ENCODE measurements at regions of chr15 and their contacts with region 1.

Region 1: DNA sequence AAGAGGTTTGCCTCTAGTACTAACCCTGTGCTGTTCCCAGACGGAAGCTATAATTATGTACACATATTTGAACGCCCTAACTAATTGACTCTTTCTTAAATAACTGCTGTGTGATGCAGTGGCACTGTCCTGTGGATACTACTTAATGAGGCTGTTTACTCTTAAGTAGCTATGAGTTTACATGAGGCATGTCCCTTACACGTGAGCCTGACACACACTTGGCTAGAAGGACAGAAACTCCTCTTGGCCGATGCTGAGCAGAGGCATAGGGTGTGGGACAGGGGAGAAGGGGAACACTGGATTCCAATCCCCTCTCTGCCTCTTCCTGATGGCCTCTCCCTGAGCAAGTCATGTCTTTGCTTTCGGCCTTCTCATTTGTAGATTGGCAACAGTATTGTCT is 21.9 kb downstream of the EHD4 start:
- DNase-seq: no peak

Region 2: DNA sequence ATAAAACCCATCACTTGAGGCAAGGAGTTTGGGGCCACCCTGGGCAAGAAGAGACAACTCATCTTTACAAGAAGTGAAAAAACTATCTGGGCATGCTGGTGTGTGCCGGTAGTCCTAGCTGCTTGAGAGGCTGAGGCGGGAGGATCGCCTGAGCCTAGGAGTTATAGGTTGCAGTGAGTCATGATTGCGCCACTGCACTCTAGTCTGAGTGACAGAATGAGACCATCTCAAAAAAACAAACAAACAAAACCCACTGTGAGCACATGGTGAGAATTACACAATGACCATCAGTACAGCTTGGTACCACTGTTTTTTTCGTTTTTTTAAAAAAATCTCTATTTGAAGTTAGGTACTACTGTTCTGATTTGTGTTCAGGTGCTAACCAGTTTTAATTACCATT is 244.0 kb after region 1 on chr15:
- intact Hi-C with region 1: no loop called
- DNase-seq: no peak

Region 3: DNA sequence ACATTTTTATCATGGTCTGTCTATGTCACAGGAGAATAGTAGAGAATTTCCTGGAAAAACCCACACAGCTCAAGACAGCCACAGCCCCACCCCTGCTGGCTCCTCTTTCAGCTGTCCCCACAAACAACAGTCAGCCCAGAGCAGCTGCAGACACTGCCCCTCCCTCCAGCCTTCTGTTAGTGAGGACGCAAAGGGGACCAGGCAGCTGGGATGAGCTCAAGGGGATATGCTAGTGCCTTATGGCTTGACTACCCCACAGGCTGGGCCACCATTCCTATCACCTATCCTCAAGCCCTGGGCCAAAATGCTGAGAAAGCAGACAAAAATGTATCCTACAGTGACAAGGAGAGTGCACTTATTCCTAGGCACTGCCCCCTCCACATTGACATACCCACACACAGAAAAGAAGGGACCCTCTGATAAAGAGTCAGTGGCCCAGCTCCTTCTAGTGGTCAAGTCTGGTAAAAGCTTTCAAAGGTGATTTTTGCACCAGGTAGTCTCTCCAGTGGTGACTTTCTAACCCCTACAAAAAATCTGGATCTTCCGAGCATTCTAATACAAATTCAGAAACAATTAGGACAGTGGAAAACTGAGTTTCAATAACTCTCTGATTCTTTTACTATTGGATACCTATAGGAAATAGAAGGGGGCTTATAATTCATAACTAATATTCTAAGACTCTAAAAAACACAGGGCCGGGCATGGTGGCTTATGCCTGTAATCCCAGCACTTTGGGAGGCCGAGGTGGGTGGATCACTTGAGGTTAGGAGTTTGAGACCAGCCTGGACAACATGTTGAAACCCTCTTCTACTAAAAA is 1564.0 kb after region 1 on chr15:
- intact Hi-C with region 1: loop called in 1 of 2 experiments (anchors 5 kb)
- DNase-seq: peak; percentile 89

Measured in posterior vena cava (tissue), 2 donors.